Endothelial cell of umbilical vein (primary cell): ENCODE measurements at regions of chr12 and their contacts with region 1.

Region 1: DNA sequence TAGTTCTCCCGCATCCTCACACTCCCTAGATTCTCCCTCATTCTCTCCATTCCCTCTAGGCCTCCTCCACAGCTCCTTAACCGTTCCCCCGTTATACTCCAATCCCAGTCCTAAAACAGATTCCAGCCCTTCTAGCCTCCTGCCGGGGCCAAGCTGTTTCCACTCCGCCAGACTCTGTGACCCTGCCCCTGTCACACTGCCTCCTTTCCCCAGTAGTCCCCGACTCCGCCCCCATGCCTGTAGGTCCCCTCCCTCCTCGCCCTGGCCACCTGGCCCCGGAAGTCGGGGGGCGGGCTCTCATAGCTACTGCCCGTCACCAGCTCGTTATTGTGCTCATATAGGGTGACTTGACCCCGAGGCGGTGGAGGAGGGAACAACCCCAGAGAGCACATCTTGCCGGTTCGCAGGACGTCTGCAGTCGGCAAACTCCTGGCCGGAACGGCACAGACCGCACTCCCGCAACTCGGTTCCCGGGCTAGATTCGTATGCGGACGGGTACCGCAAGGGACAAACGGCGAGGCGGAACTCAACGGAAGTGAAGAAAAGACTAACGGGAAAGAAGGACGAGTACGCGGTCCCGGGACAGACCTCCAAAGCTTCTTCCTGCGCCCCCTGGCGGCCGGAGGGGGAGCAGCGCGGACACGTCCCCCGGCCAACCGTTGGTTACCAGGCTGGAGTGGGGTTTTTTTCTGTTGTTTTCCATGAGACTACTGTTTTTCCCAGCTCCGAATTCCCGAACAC is at the start of gene AAAS:
- DNase-seq: peak; percentile 97
- H3K4me3 ChIP-seq: peak within 1 kb of the TSS; percentile 65 to 81 (median 68)
- H3K27ac ChIP-seq: peak within 1 kb of the TSS; percentile 74
- H3K4me1 ChIP-seq: peaks cover 24% of the 10 kb centered on the region
- H3K27me3 ChIP-seq: no peaks in the 10 kb centered on the region
- CTCF ChIP-seq: peak; percentile 99 to 100
- POLR2A ChIP-seq: peak; percentile 69
- total RNA-seq, gene AAAS: 57.8 and 60.0 TPM in 2 replicates

Region 2: GRCh38 chr12:53159195-53159839 is 161.9 kb before region 1 on chr12:
- CTCF ChIA-PET with region 1: interaction called, 13 read pairs
- POLR2A ChIA-PET with region 1: no interaction called
- dilution Hi-C with region 1: no loop called
- intact Hi-C with region 1: no loop called
- DNase-seq: peak; percentile 66
- H3K4me3 ChIP-seq: no peak overlapping the region
- H3K27ac ChIP-seq: no peak overlapping the region
- H3K4me1 ChIP-seq: no peaks in the 10 kb centered on the region
- H3K27me3 ChIP-seq: no peaks in the 10 kb centered on the region
- CTCF ChIP-seq: peak; percentile 98 to 99
- POLR2A ChIP-seq: no peak

Region 3: DNA sequence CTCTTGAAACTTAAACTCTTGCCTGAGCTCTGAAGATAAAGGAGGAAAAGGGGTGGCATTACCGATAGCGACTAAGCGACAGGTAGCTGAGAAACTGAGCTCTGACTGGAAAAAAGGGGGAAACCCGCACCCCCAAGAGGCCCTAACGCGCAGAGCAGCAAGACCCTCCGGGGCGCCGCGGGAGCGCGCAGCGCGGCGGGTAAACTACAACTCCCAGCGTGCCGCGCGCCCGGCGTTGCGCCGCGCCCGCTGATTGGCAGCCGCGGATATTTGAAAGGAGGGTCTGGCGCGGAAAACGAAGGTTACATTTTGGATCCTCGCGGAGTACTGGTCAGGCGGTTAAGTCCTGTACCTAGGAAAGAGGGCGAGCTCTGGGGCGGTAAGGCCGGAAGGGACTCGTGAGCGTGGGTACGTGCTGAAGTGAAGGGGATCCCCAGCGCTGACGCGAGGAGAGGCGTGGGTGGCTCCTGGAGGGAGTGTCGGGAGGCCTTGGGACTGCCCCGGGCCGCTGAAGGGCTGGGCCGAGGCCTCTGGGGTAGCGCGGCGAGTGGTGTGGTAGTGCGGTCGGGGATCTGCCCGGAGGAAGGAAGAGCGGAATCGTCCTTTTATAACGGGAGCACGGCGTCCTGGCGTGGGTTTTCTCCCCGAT is 53.1 kb before region 1 on chr12 and contains the start of gene ESPL1:
- CTCF ChIA-PET with region 1: interaction called, 11 read pairs
- POLR2A ChIA-PET with region 1: no interaction called
- dilution Hi-C with region 1: no loop called
- intact Hi-C with region 1: no loop called
- DNase-seq: peak; percentile 82
- H3K4me3 ChIP-seq: peak within 1 kb of the TSS; percentile 61 to 85 (median 77)
- H3K27ac ChIP-seq: no peak within 1 kb of the TSS
- H3K4me1 ChIP-seq: peaks cover 24% of the 10 kb centered on the region
- H3K27me3 ChIP-seq: no peaks in the 10 kb centered on the region
- CTCF ChIP-seq: peak; percentile 35 to 51
- POLR2A ChIP-seq: peak; percentile 15
- total RNA-seq, gene ESPL1: 39.3 and 42.7 TPM in 2 replicates

Region 4: DNA sequence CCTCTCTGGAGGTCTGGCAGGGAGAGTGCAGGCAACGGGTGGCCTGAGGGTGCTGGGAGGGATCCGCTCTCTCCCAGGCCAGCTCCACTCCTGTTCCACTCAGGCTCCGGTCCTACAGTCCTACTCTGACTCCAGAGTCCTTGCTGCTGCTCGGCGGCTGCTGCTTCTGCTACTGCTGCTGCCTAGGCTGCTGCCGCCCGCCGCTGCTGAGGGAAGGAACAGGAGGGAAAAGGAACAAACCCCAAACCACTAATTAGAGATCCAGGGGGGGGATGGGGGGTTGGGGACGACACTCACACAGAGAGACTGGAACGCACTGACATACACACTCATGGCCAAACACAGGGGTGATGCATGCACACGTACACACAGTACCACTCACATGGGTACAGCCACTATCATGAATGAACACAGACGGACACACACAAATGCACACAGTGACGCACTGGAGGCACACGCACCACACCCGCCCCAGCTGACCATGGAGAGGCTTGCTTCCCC is 15.0 kb after region 1 on chr12 and contains the start of gene SP7:
- CTCF ChIA-PET with region 1: interaction called, 11 read pairs
- POLR2A ChIA-PET with region 1: no interaction called
- dilution Hi-C with region 1: no loop called
- intact Hi-C with region 1: no loop called
- DNase-seq: no peak
- H3K4me3 ChIP-seq: no peak within 1 kb of the TSS
- H3K27ac ChIP-seq: no peak within 1 kb of the TSS
- H3K4me1 ChIP-seq: no peaks in the 10 kb centered on the region
- H3K27me3 ChIP-seq: peaks cover 21 to 27% of the 10 kb centered on the region in 2 experiments
- CTCF ChIP-seq: no peak
- POLR2A ChIP-seq: no peak
- total RNA-seq, gene SP7: not detected in 2 replicates

Region 5: GRCh38 chr12:53379389-53380103 is 58.3 kb after region 1 on chr12:
- CTCF ChIA-PET with region 1: interaction called, 9 read pairs
- POLR2A ChIA-PET with region 1: no interaction called
- dilution Hi-C with region 1: no loop called
- intact Hi-C with region 1: loop called (anchors 2 kb)
- DNase-seq: peak; percentile 100
- H3K4me3 ChIP-seq: peak overlapping the region; percentile 4 to 55 (median 47)
- H3K27ac ChIP-seq: peak overlapping the region; percentile 58
- H3K4me1 ChIP-seq: peaks cover 30% of the 10 kb centered on the region
- H3K27me3 ChIP-seq: no peaks in the 10 kb centered on the region
- CTCF ChIP-seq: no peak
- POLR2A ChIP-seq: peak; percentile 90

Region 6: DNA sequence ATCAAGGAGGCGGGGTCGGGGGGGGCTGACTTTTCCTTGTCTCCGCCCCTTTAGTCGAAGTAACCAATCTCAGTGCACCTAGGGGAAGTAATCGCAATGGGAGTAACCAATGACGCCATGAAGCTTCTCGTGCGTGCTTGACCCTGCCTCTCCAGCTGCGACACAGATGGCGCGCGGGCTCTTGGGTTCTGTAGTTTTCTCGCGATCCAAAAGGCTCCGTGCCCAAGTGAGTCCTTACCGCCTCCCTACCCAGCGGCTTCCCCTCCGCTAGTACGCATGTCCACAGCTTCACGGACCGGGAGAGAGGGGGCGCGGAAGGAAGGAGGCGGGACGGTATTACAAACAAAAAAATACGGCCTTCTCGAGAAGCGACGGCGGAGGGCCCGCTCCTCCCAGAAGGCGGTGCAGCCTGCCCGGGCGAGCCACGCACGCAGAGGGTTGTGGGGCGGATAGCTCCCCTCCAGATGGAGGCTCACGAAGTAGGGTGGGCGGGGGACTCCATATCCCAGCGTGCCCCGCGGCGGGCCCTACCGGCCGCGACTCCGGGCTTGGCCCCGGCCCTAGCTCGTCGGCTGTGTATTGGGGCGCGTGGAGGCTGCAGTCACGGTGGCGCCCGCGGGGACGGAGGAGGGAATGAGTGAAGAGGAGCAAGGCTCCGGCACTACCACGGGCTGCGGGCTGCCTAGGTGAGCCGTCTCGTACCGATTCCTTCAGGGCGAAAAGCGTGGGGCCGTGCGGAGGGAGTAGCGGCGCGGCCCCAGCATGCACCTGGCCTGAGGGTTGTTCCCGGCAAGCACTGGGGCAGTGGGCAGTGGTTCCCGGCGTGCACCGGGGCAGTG is 179.8 kb after region 1 on chr12 and contains the start of gene TARBP2:
- CTCF ChIA-PET with region 1: interaction called, 5 read pairs
- POLR2A ChIA-PET with region 1: no interaction called
- dilution Hi-C with region 1: no loop called
- intact Hi-C with region 1: loop called (anchors 1 kb)
- DNase-seq: peak; percentile 100
- H3K4me3 ChIP-seq: peak within 1 kb of the TSS; percentile 2 to 54 (median 49)
- H3K27ac ChIP-seq: peak within 1 kb of the TSS; percentile 52
- H3K4me1 ChIP-seq: peaks cover 32% of the 10 kb centered on the region
- H3K27me3 ChIP-seq: no peaks in the 10 kb centered on the region
- CTCF ChIP-seq: no peak
- POLR2A ChIP-seq: peak; percentile 82
- total RNA-seq, gene TARBP2: 53.8 and 57.2 TPM in 2 replicates